Right cardiac atrium (tissue), 5 donors: ENCODE measurements at regions of chr16 and their contacts with region 1.

Region 1: DNA sequence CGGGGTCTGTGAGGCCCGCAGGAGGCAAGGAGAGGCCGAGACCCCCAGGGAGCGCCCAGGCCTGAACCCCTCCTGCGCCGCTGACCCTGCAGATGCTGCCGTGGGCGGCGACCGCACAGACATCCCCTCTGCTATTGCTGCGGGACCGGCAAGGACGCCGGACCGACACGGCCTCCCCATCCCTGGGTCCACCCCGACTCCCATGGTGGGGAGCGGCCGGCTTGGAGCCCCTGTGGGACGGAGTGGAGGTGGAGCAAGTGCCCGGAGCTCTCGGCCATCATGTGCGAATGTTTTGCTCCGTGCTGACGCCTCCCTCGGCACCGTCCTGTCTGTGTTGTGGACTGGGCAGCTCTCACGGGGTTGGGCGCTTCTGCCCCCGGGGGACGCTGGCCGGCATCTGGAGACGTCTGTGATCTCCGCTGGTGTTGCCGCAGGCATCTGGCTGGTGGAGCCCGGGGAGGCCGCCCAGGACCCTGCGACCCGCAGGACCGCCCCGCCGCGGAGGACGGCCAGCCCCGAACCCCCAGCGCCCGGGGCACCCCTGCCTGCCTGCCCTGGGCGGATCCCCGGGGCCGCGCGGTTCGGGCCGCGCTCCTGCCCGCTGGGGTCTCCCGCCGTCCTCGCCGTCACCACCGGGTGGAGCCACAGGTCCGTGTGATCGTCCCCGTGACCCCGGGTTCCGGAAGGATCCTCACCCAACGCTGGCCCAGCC is 12.8 kb upstream of the GNG13 start:
- DNase-seq: peak in 2 of 3 donors; percentile 83 to 85
- ATAC-seq: peak; percentile 66 to 77
- H3K4me3 ChIP-seq: no peak overlapping the region
- H3K27ac ChIP-seq: no peak overlapping the region
- H3K4me1 ChIP-seq: no peaks in the 10 kb centered on the region
- H3K27me3 ChIP-seq: no peaks in the 10 kb centered on the region

Region 2: DNA sequence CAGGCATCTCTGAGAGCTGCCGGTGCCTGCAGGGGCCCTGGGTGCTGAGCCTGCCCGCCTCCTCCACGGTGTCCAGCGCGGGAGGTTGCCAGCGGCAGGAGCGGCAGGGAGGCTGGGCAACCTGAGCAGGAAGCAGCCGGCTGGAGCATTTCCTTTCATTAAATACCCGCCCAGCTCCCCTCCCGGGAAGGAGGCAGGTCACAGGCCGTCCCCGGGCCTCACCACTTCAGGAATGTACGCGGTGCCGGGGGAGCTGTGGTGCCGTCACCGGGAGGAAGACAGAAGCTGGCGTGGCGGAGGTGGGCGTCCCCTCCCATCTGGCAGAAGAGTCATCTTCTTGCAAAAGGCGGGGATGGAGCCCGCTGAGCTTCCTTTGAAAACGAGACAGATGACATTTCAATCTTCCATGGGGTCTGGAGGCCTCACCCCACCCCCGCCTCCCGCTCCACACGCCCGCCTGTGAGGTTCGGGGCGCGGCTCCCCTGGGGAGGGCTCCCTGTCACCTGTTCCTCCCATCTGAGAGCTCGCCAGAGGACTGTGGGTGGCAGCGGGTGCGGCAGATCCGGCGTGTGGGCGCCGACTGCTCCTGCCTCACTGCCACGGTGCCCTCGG is 184.2 kb after region 1 on chr16:
- intact Hi-C with region 1: no loop called
- DNase-seq: peak in 2 of 3 donors; percentile 45 to 71
- ATAC-seq: peak; percentile 45 to 76
- H3K4me3 ChIP-seq: no peak overlapping the region
- H3K27ac ChIP-seq: no peak overlapping the region
- H3K4me1 ChIP-seq: no peaks in the 10 kb centered on the region
- H3K27me3 ChIP-seq: no peaks in the 10 kb centered on the region

Region 3: GRCh38 chr16:1054660-1055556 is 241.5 kb after region 1 on chr16:
- intact Hi-C with region 1: loop called in 3 of 4 experiments (anchors 2 to 5 kb)
- DNase-seq: peak; percentile 73 to 90 (median 86)
- ATAC-seq: peak; percentile 61 to 64
- H3K4me3 ChIP-seq: no peak overlapping the region
- H3K27ac ChIP-seq: no peak overlapping the region
- H3K4me1 ChIP-seq: no peaks in the 10 kb centered on the region
- H3K27me3 ChIP-seq: no peaks in the 10 kb centered on the region